Activated T-helper 1 cell treated with anti-CD3 and anti-CD28 coated beads, Interleukin-12 subunit alpha, Interleukin-12 subunit beta, Interleukin-2, Interleukin-4 antibody, amounts not matched to agents 30 ng/mL and 10 ng/mL and 1 ng/mL, durations not matched to agents 14 hours and 24 hours and 36 hours (primary cell): ENCODE measurements at regions of chr3 and their contacts with region 1.

Region 1: DNA sequence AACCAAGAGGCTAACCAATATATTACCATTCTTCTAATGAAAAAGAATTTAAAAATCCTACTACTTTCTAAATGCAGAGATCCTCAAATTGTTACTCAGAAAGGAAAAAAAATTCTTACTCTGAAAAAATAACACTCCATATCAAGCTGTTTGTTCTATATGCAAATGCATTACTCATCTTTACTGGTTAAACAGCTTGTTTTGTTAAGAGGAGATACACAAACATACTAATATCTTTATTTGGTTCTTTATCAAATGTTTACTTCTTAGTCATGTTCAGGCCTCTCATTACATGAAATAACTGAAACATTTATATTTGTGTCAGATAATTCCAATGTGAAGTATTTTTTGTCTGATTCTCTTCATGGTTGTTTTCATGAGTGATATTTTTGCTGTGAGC is 146.8 kb downstream of the PCCB start:
- DNase-seq: no peak
- H3K4me3 Mint-ChIP-seq: no peak overlapping the region
- H3K27ac Mint-ChIP-seq: peak overlapping the region; percentile 36
- H3K4me1 Mint-ChIP-seq: no peaks in the 10 kb centered on the region
- H3K27me3 Mint-ChIP-seq: no peaks in the 10 kb centered on the region

Region 2: GRCh38 chr3:136297826-136298225 is 99.1 kb before region 1 on chr3:
- intact Hi-C with region 1: no loop called
- DNase-seq: no peak
- H3K4me3 Mint-ChIP-seq: no peak overlapping the region
- H3K27ac Mint-ChIP-seq: no peak overlapping the region
- H3K4me1 Mint-ChIP-seq: no peaks in the 10 kb centered on the region
- H3K27me3 Mint-ChIP-seq: no peaks in the 10 kb centered on the region

Region 3: DNA sequence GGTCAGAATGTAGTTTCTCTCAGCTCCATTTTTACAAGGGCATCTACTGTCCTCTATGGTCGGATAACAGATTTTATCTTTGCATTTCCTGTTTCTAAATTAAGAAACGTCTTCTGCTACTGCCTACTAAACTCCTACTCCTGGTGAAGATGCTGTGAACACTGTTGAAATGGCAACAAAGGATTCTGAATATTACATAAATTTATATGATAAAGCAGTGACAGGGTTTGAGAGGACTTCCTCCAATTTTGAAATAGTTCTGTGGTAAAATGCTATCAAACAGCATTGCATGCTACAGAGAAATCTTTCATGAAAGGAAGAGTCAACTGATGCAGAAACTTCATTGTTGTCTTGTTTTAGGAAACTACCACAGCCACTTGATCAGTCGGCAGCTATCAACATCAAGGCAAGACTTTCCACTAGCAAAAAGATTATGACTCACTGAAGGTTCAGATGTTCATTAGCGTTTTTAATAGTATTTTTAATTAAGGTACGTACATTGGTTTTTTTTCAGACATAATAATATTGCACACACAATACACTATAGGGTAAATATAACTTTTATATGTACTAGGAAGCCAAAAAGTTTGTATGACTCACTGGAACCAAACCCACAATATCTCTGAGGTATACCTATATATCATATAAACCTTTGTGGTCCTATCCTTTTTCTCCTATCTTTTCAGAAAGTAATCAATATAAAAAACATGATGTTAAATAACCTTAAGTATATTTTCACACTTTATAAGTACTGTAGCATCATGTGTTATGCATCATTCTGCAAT is 199.2 kb after region 1 on chr3:
- intact Hi-C with region 1: loop called (anchors 10 kb)
- DNase-seq: no peak
- H3K4me3 Mint-ChIP-seq: peak overlapping the region; percentile 51
- H3K27ac Mint-ChIP-seq: peak overlapping the region; percentile 70
- H3K4me1 Mint-ChIP-seq: peaks cover 24% of the 10 kb centered on the region
- H3K27me3 Mint-ChIP-seq: no peaks in the 10 kb centered on the region